A673 (cell line): ENCODE measurements at regions of chr2 and their contacts with region 1.

Region 1: DNA sequence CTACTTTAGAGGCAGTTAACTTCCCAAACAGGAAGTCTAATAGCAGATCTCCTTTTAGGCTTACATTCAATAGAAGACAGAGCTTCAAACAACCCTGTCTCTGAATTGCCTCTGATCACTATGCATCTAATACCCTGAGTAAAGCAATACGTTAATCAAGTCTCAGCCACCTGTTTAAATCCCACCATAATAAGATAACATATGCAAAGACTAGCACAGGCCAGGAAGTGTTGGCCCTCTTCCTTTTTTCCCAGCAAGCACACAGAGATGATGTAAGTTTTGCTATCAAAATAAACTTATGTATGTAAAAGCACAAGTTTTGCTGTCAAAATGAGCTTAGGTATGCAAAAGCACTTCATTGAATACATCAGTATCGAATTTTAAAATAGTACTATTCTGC is 385.5 kb downstream of the RND3 start:
- DNase-seq: no peak
- H3K4me3 ChIP-seq: no peak overlapping the region
- H3K27ac ChIP-seq: no peak overlapping the region
- H3K4me1 ChIP-seq: no peaks in the 10 kb centered on the region
- H3K27me3 ChIP-seq: no peaks in the 10 kb centered on the region
- CTCF ChIP-seq: no peak

Region 2: GRCh38 chr2:149767516-149767974 is 334.4 kb before region 1 on chr2:
- CTCF ChIA-PET with region 1: no interaction called
- POLR2A ChIA-PET with region 1: no interaction called
- intact Hi-C with region 1: no loop called
- DNase-seq: peak; percentile 65
- H3K4me3 ChIP-seq: peak overlapping the region; percentile 9
- H3K27ac ChIP-seq: no peak overlapping the region
- H3K4me1 ChIP-seq: peaks cover 17% of the 10 kb centered on the region
- H3K27me3 ChIP-seq: no peaks in the 10 kb centered on the region
- CTCF ChIP-seq: no peak

Region 3: DNA sequence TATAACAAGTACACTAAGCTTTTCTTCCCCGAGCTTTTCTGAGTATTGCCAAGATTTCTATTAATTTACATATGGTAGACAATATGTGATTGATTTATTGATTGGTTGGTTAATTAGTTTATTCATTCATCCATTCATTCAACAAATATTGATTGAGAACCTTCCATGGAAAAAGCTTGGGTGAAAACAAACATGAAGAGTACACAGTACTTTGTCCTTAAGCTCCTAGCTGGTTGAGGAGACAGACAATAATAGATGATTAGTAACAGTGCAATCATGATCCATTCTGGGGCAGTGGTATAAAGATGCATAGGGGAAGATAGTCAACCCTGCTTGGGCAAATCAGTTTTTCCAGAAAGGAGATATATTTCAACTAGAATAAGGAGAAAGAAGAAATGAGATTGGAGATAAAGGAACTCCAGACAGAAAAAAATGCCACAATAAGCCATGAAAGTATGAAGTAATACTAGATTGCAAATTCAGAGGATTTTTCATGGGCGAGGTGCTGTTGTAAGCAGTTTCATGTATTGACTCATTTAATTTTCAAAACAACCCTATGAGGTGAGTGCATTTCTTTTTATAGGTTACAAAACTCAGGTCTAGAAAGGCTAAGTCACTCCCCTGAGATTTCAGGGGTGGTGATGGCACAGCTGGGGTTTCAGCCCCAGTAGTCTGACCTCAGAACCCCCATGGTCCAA is 256.0 kb after region 1 on chr2:
- CTCF ChIA-PET with region 1: no interaction called
- POLR2A ChIA-PET with region 1: interaction called, 11 read pairs
- intact Hi-C with region 1: no loop called
- DNase-seq: no peak
- H3K4me3 ChIP-seq: no peak overlapping the region
- H3K27ac ChIP-seq: no peak overlapping the region
- H3K4me1 ChIP-seq: no peaks in the 10 kb centered on the region
- H3K27me3 ChIP-seq: no peaks in the 10 kb centered on the region
- CTCF ChIP-seq: no peak